ENCODE measurements at regions of chr11 and their contacts with region 1.

Region 1: DNA sequence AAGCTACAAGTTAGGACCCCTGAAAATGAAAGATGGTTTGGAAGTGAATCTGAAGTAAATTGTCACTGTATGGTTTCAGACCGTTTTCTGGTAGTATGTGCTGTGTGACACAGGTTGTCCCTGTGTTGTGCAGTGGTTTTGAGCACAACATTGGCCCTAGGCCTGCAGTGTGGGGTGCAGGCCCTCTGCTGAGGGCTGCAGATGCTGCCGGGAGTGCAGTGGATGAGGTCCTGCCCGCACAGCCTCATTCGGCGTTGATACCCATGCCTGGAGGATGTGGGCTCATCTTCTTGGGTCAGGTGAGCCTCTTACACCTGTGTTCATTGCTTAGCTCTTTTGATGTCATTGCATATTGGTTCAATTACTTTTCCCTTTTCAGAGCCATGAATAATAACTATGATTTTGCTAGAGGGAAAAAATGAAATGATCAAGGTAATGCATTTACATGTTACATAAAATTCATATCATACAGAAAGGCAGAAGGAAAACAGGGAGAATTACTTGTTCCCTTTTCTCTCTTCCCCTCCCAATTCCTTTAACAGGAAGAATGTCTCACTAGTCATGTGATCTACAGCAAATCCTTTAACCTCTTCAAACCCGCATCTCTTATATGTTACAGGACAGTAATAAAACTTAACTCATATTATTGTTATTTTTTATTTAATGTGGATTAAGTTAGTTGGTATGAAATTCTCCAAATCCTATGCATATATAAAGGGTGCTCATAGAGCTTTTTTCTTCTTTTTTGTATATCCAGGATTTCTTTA is 48.7 kb downstream of the PTPRJ start:
- DNase-seq: peak; percentile 44
- ATAC-seq: peak; percentile 71
- H3K4me3 Mint-ChIP-seq: no peak overlapping the region
- H3K27ac Mint-ChIP-seq: peak overlapping the region; percentile 73
- H3K4me1 Mint-ChIP-seq: peaks cover 65% of the 10 kb centered on the region
- H3K27me3 Mint-ChIP-seq: no peaks in the 10 kb centered on the region

Region 2: GRCh38 chr11:47879259-47880158 is 149.6 kb before region 1 on chr11:
- CTCF ChIA-PET with region 1: no interaction called
- POLR2A ChIA-PET with region 1: no interaction called
- DNase-seq: no peak
- ATAC-seq: no peak
- H3K4me3 Mint-ChIP-seq: no peak overlapping the region
- H3K27ac Mint-ChIP-seq: no peak overlapping the region
- H3K4me1 Mint-ChIP-seq: peaks cover 11% of the 10 kb centered on the region
- H3K27me3 Mint-ChIP-seq: peaks cover 2% of the 10 kb centered on the region

Region 3: DNA sequence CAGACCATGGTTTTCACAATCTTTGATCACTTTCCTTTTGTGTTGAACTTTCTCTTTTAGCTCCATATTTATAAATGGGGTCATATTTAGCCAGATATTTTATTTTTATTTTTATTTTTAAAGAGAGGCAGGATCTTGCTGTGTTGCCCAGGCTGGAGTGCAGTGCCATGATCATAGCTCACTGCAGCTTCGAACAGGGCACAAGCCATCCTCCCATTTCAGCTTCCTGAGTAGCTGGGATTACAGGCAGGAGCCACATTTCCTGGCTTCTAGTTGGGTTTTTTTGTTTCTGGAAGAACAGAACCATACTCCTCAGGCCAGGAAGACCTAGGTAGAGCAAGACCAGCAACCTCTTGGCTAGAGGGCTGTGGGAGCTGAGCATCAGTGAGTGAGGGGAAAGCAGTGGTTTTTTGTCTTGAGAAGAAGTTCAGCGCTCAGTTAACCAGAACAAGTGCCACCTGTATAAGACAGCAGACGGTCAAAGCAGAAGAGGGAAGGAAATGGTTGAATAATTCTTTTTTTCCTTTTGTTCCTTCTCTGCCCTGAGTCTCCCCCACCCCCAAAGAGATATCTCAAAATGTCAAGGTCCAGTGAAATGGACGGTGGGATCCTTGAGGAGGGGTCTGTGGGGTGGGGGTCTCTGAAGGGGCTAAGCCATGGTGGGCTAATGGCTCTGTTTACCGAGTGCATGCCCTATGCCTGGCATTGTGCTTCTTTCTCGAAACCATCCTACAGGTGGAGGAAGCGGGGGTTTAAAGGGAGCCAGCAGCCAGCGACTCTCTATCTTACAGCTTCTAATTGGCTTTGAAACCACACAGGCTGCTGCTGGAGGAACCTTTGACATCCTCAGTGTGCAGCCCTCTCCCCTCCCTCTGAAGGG is 14.3 kb after region 1 on chr11:
- CTCF ChIA-PET with region 1: interaction called, 10 read pairs
- POLR2A ChIA-PET with region 1: interaction called, 4 read pairs
- DNase-seq: peak; percentile 50
- ATAC-seq: peak; percentile 78
- H3K4me3 Mint-ChIP-seq: peak overlapping the region; percentile 31
- H3K27ac Mint-ChIP-seq: peak overlapping the region; percentile 84
- H3K4me1 Mint-ChIP-seq: peaks cover 64% of the 10 kb centered on the region
- H3K27me3 Mint-ChIP-seq: no peaks in the 10 kb centered on the region